ENCODE measurements at regions of chr19 and their contacts with region 1.

Region 1: DNA sequence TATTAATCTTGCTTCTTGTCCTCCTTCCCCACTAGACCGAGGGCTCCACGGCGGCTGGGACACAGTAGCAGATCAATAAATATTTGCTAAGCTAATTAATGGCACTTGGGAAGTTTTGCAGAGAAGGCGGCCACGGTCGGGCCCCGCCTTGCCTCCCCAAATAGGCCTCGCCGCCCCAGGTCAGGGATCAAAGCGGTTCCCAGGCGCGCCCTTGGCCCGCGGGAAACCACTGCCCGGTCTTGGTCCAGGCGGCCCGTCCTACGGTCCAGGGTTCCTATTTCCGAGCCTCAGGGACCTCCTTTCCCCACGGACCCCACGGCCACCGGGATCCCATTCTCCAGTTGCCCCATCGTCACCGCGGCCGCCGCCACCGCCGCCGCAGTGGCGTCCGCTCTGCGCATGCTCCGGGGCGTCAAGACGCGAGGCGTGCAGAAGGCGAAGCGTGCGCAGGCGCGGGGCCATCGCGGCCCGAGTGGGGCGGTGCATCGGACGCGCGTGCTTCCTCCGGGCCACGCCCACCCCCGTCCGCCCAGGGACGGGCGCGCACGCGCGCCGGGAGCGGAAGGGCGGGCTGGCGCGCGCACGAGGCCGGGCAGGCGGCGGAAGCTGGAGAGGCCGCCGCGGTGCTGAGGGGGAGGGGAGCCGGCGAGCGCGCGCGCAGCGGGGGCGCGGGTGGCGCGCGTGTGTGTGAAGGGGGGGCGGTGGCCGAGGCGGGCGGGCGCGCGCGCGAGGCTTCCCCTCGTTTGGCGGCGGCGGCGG is at the start of gene SMARCA4:
- DNase-seq: peak; percentile 93 to 100 (median 98)
- ATAC-seq: peak; percentile 75
- H3K4me3 ChIP-seq: peak within 1 kb of the TSS; percentile 91
- H3K4me3 Mint-ChIP-seq: peak within 1 kb of the TSS; percentile 94
- H3K27ac ChIP-seq: peak within 1 kb of the TSS; percentile 91 to 92
- H3K27ac Mint-ChIP-seq: peak within 1 kb of the TSS; percentile 89
- H3K4me1 ChIP-seq: peaks cover 46% of the 10 kb centered on the region
- H3K4me1 Mint-ChIP-seq: peaks cover 39% of the 10 kb centered on the region
- H3K27me3 ChIP-seq: no peaks in the 10 kb centered on the region
- H3K27me3 Mint-ChIP-seq: no peaks in the 10 kb centered on the region
- CTCF ChIP-seq: no peak
- total RNA-seq, gene SMARCA4: 69.6 to 74.5 TPM

Region 2: DNA sequence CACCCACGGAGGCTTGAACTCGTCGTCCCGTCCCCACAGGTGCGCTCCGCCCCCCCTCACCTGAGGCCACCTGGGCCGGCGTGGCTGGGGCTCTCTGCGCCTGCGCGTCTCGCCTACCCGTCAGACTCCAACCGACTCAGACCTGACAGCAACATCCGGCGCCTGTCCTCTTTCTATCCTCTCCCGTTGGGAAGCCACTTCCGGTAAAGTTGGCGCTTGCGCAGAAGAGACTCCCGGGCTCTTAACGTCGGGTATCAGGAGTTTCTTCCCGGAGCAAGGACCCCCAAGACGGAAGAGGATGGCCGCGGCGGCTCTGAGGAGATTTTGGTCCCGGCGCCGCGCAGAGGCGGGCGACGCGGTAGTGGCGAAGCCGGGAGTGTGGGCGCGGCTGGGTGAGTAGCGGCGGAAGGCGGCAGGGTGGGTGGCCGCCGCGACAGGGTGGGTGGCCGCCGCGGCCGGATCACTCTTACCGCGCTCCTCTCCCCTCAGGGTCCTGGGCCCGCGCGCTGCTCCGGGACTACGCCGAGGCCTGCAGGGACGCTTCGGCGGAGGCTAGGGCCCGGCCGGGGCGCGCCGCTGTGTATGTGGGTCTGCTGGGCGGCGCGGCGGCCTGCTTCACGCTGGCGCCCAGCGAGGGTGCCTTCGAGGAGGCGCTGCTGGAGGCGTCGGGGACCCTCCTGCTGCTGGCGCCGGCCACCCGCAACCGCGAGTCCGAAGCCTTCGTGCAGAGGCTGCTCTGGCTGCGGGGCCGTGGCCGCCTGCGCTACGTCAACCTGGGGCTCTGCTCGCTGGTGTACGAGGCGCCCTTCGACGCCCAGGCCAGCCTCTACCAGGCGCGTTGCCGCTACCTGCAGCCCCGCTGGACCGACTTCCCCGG is 31.7 kb before region 1 on chr19 and contains the starts of genes TIMM29 and YIPF2:
- CTCF ChIA-PET with region 1: no interaction called
- POLR2A ChIA-PET with region 1: interaction called, 3 read pairs
- intact Hi-C with region 1: loop called in 1 of 2 experiments (anchors 5 kb)
- DNase-seq: peak; percentile 87 to 97 (median 92)
- ATAC-seq: peak; percentile 90
- H3K4me3 ChIP-seq: peak within 1 kb of the TSS; percentile 75
- H3K4me3 Mint-ChIP-seq: peak within 1 kb of the TSS; percentile 97
- H3K27ac ChIP-seq: peak within 1 kb of the TSS; percentile 46 to 61
- H3K27ac Mint-ChIP-seq: peak within 1 kb of the TSS; percentile 89
- H3K4me1 ChIP-seq: peaks cover 33% of the 10 kb centered on the region
- H3K4me1 Mint-ChIP-seq: peaks cover 16% of the 10 kb centered on the region
- H3K27me3 ChIP-seq: no peaks in the 10 kb centered on the region
- H3K27me3 Mint-ChIP-seq: no peaks in the 10 kb centered on the region
- CTCF ChIP-seq: no peak
- total RNA-seq, gene TIMM29: 22.6 to 24.8 TPM
- total RNA-seq, gene YIPF2: 21.1 to 21.7 TPM

Region 3: DNA sequence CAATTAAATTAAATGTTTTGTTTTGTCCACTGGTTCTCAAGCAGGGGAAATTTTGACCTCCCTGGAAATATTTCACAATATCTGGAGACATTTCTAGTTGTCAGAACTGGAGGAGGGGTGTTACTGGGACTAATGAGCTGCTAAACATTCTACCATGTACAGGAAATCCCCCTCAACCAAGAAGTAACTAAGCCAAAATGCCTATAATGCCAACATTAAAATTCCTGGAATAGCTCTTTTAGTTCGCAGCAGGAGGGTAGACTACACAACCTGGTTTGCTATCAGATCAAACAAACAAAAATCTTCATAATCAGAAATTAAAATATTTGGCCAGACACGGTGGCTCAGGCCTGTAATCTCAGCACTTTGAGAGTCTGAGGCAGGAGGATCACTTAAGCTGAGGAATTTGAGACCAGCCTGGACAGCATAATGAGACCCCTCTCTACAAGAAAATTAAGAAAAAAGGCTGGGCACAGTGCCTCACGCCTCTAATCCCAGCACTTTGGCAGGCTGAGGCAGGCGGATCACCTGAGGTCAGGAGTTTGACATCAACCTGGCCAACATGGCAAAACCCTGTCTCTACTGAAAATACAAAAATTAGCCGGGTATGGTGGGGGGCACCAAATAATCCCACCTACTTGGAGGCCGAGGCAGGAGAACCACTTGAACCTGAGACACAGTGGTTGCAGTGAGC is 13.4 kb before region 1 on chr19:
- CTCF ChIA-PET with region 1: interaction called, 8 read pairs
- POLR2A ChIA-PET with region 1: interaction called, 7 read pairs
- intact Hi-C with region 1: loop called in 1 of 2 experiments (anchors 2 kb)
- DNase-seq: no peak
- ATAC-seq: no peak
- H3K4me3 ChIP-seq: no peak overlapping the region
- H3K4me3 Mint-ChIP-seq: no peak overlapping the region
- H3K27ac ChIP-seq: no peak overlapping the region
- H3K27ac Mint-ChIP-seq: no peak overlapping the region
- H3K4me1 ChIP-seq: peaks cover 2% of the 10 kb centered on the region
- H3K4me1 Mint-ChIP-seq: peaks cover 2% of the 10 kb centered on the region
- H3K27me3 ChIP-seq: no peaks in the 10 kb centered on the region
- H3K27me3 Mint-ChIP-seq: no peaks in the 10 kb centered on the region
- CTCF ChIP-seq: no peak

Region 4: DNA sequence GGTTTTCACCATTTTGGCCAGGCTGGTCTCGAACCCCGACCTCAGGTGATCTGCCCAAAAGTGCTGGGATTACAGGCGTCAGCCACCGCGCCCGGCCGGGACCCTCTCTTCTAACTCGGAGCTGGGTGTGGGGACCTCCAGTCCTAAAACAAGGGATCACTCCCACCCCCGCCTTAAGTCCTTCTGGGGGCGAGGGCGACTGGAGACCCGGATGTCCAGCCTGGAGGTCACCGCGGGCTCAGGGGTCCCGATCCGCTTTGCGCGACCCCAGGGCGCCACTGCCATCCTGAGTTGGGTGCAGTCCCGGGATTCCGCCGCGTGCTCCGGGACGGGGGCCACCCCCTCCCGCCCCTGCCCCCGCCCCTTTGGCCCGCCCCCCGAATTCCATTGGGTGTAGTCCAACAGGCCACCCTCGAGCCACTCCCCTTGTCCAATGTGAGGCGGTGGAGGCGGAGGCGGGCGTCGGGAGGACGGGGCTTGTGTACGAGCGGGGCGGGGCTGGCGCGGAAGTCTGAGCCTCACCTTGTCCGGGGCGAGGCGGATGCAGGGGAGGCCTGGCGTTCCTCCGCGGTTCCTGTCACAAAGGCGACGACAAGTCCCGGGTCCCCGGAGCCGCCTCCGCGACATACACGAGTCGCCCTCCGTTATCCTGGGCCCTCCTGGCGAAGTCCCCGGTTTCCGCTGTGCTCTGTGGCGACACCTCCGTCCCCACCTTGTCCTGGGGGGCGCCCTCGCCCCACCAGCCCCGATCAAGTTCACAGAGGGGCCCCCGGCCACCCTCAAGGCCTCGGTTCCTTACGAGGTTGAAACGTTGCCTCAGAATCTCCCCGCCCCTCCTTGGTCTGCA is 129.8 kb after region 1 on chr19:
- CTCF ChIA-PET with region 1: no interaction called
- POLR2A ChIA-PET with region 1: interaction called, 8 read pairs
- intact Hi-C with region 1: loop called (anchors 2 to 10 kb)
- DNase-seq: peak; percentile 94 to 99 (median 97)
- ATAC-seq: peak; percentile 86
- H3K4me3 ChIP-seq: peak overlapping the region; percentile 86
- H3K4me3 Mint-ChIP-seq: peak overlapping the region; percentile 89
- H3K27ac ChIP-seq: peak overlapping the region; percentile 98 to 99
- H3K27ac Mint-ChIP-seq: peak overlapping the region; percentile 92
- H3K4me1 ChIP-seq: peaks cover 73% of the 10 kb centered on the region
- H3K4me1 Mint-ChIP-seq: peaks cover 49% of the 10 kb centered on the region
- H3K27me3 ChIP-seq: no peaks in the 10 kb centered on the region
- H3K27me3 Mint-ChIP-seq: no peaks in the 10 kb centered on the region
- CTCF ChIP-seq: no peak